CD4-positive, alpha-beta memory T cell (primary cell): ENCODE measurements at regions of chr10 and their contacts with region 1.

Region 1: DNA sequence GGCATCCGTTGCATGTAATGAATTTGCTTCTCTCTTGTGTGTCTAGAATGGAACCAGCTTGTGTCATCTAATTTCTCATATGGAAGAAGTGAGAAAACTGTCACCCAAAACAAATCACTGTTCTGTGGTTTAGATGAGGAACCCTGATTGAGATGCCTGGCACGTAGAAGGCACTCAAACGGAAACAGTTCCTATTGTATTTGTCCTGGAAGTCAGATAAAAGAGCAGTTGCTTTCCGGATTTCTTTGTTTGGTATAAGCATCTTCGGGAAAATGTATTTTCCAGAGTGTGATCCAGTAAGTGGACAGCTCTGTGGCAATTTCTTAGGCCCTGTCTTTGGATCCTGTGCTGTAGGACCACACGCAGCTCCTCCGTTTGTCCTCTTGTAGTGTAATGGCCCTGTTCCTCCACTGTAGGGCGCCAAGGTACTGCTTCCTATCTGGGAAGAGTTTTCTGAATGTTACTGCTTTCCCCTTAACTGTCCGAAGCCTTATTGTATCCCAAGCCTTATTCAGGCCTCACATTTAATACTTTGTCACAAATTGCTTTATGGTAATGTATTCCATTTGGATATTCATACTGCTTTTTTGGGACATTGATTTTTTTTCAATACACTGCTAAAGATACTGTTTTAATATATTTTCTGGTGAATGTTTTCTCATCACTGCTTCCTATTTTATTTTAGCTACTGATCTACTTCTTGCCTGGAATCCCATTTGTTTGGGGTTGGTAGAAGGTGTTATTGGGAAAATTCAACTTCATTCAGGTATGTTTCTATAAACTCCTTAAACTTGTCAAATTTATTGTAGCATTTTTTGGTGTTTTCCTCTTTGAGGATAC is 24.8 kb downstream of the INPP5F start:
- DNase-seq: peak; percentile 41 to 54 (median 48)
- H3K4me3 ChIP-seq: no peak overlapping the region
- H3K4me3 Mint-ChIP-seq: peak overlapping the region in 3 of 8 donors; percentile 20 to 38 (median 20)
- H3K27ac ChIP-seq: no peak overlapping the region
- H3K27ac Mint-ChIP-seq: peak overlapping the region in 2 of 7 donors; percentile 54 to 83
- H3K4me1 ChIP-seq: peaks cover 5% of the 10 kb centered on the region
- H3K4me1 Mint-ChIP-seq: peaks cover 7 to 11% (median 10%) of the 10 kb centered on the region in 4 donors
- H3K27me3 ChIP-seq: no peaks in the 10 kb centered on the region
- H3K27me3 Mint-ChIP-seq: no peaks in the 10 kb centered on the region

Region 2: DNA sequence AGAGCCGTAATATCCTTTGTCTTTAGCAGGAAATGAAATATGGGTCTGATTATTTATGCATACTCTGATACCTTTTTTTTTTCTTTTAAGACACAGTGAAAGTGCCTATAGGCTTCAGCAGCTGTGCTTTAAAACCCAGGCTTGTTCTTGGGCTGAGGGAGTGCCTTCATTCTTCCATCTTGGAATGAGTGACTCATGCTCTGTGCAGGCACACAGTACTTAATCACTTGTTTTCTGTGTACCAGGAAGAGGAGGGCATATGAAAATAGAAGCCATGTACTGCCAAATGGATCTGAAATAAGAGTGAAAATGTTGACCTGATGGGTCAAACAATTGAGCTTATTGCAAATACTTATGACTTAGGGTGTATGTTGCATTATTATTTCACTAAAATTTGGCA is 12.8 kb before region 1 on chr10:
- CTCF ChIA-PET with region 1: interaction called, 39 read pairs
- POLR2A ChIA-PET with region 1: interaction called, 3 read pairs
- intact Hi-C with region 1: no loop called
- DNase-seq: no peak
- H3K4me3 ChIP-seq: no peak overlapping the region
- H3K4me3 Mint-ChIP-seq: peak overlapping the region in 6 of 8 donors; percentile 7 to 53 (median 43)
- H3K27ac ChIP-seq: no peak overlapping the region
- H3K27ac Mint-ChIP-seq: peak overlapping the region in 5 of 7 donors; percentile 1 to 81 (median 64)
- H3K4me1 ChIP-seq: peaks cover 26% of the 10 kb centered on the region
- H3K4me1 Mint-ChIP-seq: peaks cover 16 to 31% (median 20%) of the 10 kb centered on the region in 4 donors
- H3K27me3 ChIP-seq: no peaks in the 10 kb centered on the region
- H3K27me3 Mint-ChIP-seq: no peaks in the 10 kb centered on the region

Region 3: GRCh38 chr10:119834188-119834587 is 83.6 kb after region 1 on chr10:
- CTCF ChIA-PET with region 1: interaction called, 4 read pairs
- POLR2A ChIA-PET with region 1: no interaction called
- intact Hi-C with region 1: loop called (anchors 5 kb)
- DNase-seq: no peak
- H3K4me3 ChIP-seq: no peak overlapping the region
- H3K4me3 Mint-ChIP-seq: no peak overlapping the region
- H3K27ac ChIP-seq: no peak overlapping the region
- H3K27ac Mint-ChIP-seq: peak overlapping the region; percentile 19 to 88 (median 69)
- H3K4me1 ChIP-seq: peaks cover 6% of the 10 kb centered on the region
- H3K4me1 Mint-ChIP-seq: peaks cover 0 to 7% (median 7%) of the 10 kb centered on the region in 4 donors
- H3K27me3 ChIP-seq: no peaks in the 10 kb centered on the region
- H3K27me3 Mint-ChIP-seq: no peaks in the 10 kb centered on the region

Region 4: GRCh38 chr10:120336911-120337540 is 586.4 kb after region 1 on chr10:
- CTCF ChIA-PET with region 1: interaction called, 26 read pairs
- POLR2A ChIA-PET with region 1: no interaction called
- intact Hi-C with region 1: no loop called
- DNase-seq: peak; percentile 14 to 42 (median 33)
- H3K4me3 ChIP-seq: no peak overlapping the region
- H3K4me3 Mint-ChIP-seq: no peak overlapping the region
- H3K27ac ChIP-seq: no peak overlapping the region
- H3K27ac Mint-ChIP-seq: no peak overlapping the region
- H3K4me1 ChIP-seq: no peaks in the 10 kb centered on the region
- H3K4me1 Mint-ChIP-seq: no peaks in the 10 kb centered on the region
- H3K27me3 ChIP-seq: no peaks in the 10 kb centered on the region
- H3K27me3 Mint-ChIP-seq: peaks cover 4 to 7% of the 10 kb centered on the region in 2 donors